Dorsolateral prefrontal cortex (tissue), 120 donors: ENCODE measurements at regions of chr3 and their contacts with region 1.

Region 1: GRCh38 chr3:123449102-123449996 is 459 bp upstream of the ADCY5 start:
- DNase-seq: peak in 5 of 10 donors; percentile 35 to 83 (median 72)
- H3K4me3 ChIP-seq: peak overlapping the region; percentile 56 to 89 (median 76)
- H3K27ac ChIP-seq: peak overlapping the region; percentile 74 to 100 (median 93)
- H3K27me3 ChIP-seq: no peaks in the 10 kb centered on the region
- CTCF ChIP-seq: peak in 4 of 56 donors; percentile 6 to 39 (median 11)

Region 2: GRCh38 chr3:123347684-123348264 is 101.6 kb before region 1 on chr3:
- intact Hi-C with region 1: loop called (anchors 5 kb)
- DNase-seq: peak in 2 of 10 donors; percentile 11 to 40
- H3K4me3 ChIP-seq: no peak overlapping the region
- H3K27ac ChIP-seq: peak overlapping the region in 22 of 59 donors; percentile 6 to 77 (median 58)
- H3K27me3 ChIP-seq: no peaks in the 10 kb centered on the region
- CTCF ChIP-seq: no peak

Region 3: DNA sequence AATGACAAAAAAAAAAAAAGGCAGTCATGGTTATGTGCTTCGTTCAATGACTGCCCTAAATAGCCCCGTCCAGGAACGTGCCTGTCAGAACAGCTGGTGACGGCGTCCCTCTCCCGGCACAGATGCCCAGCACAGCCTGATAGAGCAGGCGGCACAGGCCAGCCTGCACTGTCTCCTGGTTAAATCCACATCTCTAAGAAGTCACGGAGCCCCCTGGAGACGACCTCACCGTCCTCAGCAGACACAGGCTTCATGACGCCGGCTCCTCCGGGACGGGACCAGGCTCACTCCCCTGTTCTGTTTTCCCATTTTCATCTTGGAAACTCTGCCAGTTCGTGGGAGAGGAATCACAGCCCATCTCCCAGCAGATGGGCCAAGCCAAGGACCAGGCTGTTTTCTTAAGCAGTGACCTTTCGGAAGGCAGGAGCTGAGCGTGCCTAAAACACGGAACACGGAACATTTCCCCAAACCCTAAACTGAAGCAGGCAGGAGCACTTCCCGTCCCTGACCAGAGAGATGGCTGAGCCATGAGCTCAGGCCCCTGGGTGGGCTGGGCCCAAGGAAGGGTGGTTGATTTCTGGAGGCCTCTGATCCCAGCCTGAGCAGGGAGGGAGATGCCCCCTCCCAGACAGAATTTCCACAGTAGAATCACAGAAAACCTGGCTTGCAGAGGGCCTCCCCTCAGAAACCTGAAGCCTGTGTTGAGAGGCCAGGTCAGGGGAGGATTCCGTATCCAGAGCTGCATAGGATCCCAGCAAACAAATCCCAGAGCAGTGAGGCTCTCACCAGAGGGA is 36.3 kb before region 1 on chr3:
- intact Hi-C with region 1: loop called (anchors 5 kb)
- DNase-seq: peak in 9 of 10 donors; percentile 61 to 82 (median 74)
- H3K4me3 ChIP-seq: peak overlapping the region in 45 of 59 donors; percentile 0 to 46 (median 26)
- H3K27ac ChIP-seq: peak overlapping the region; percentile 70 to 99 (median 92)
- H3K27me3 ChIP-seq: no peaks in the 10 kb centered on the region
- CTCF ChIP-seq: peak in 3 of 56 donors; percentile 3 to 24 (median 11)

Region 4: GRCh38 chr3:123481722-123482457 is 32.5 kb after region 1 on chr3:
- intact Hi-C with region 1: loop called in 1 of 2 experiments (anchors 2 kb)
- DNase-seq: peak in 4 of 10 donors; percentile 30 to 63 (median 47)
- H3K4me3 ChIP-seq: no peak overlapping the region
- H3K27ac ChIP-seq: peak overlapping the region in 4 of 59 donors; percentile 8 to 21 (median 10)
- H3K27me3 ChIP-seq: no peaks in the 10 kb centered on the region
- CTCF ChIP-seq: no peak